Activated CD4-positive, alpha-beta T cell treated with anti-CD3 and anti-CD28 coated beads for 36 hours (primary cell): ENCODE measurements at regions of chr5 and their contacts with region 1.

Region 1: GRCh38 chr5:16465544-16466466 is at the start of gene ZNF622:
- DNase-seq: peak; percentile 92
- ATAC-seq: peak; percentile 80
- H3K4me3 Mint-ChIP-seq: peak within 1 kb of the TSS; percentile 99
- H3K27ac Mint-ChIP-seq: peak within 1 kb of the TSS; percentile 98
- H3K4me1 Mint-ChIP-seq: peaks cover 67% of the 10 kb centered on the region
- H3K27me3 Mint-ChIP-seq: no peaks in the 10 kb centered on the region
- total RNA-seq, gene ZNF622: 30.9 to 36.3 TPM

Region 2: GRCh38 chr5:14809369-14810155 is 1656.2 kb before region 1 on chr5:
- CTCF ChIA-PET with region 1: no interaction called
- POLR2A ChIA-PET with region 1: no interaction called
- intact Hi-C with region 1: loop called in 1 of 2 experiments (anchors 10 kb)
- DNase-seq: peak; percentile 87
- ATAC-seq: peak; percentile 96
- H3K4me3 Mint-ChIP-seq: peak overlapping the region; percentile 55
- H3K27ac Mint-ChIP-seq: peak overlapping the region; percentile 71
- H3K4me1 Mint-ChIP-seq: peaks cover 51% of the 10 kb centered on the region
- H3K27me3 Mint-ChIP-seq: no peaks in the 10 kb centered on the region

Region 3: GRCh38 chr5:16552666-16553343 is 87.0 kb after region 1 on chr5:
- CTCF ChIA-PET with region 1: interaction called, 4 read pairs
- POLR2A ChIA-PET with region 1: no interaction called
- intact Hi-C with region 1: loop called (anchors 2 to 5 kb)
- DNase-seq: peak; percentile 81
- ATAC-seq: peak; percentile 89
- H3K4me3 Mint-ChIP-seq: no peak overlapping the region
- H3K27ac Mint-ChIP-seq: peak overlapping the region; percentile 45
- H3K4me1 Mint-ChIP-seq: peaks cover 30% of the 10 kb centered on the region
- H3K27me3 Mint-ChIP-seq: no peaks in the 10 kb centered on the region

Region 4: GRCh38 chr5:16616536-16617273 is 150.9 kb after region 1 on chr5 and contains the start of gene RETREG1:
- CTCF ChIA-PET with region 1: interaction called, 3 read pairs
- POLR2A ChIA-PET with region 1: no interaction called
- intact Hi-C with region 1: loop called (anchors 1 to 2 kb)
- DNase-seq: peak; percentile 90
- ATAC-seq: peak; percentile 72
- H3K4me3 Mint-ChIP-seq: peak within 1 kb of the TSS; percentile 98
- H3K27ac Mint-ChIP-seq: peak within 1 kb of the TSS; percentile 94
- H3K4me1 Mint-ChIP-seq: peaks cover 28% of the 10 kb centered on the region
- H3K27me3 Mint-ChIP-seq: no peaks in the 10 kb centered on the region
- total RNA-seq, gene RETREG1: 17.7 to 23.3 TPM

Region 5: GRCh38 chr5:16644301-16644889 is 178.6 kb after region 1 on chr5:
- CTCF ChIA-PET with region 1: no interaction called
- POLR2A ChIA-PET with region 1: no interaction called
- intact Hi-C with region 1: no loop called
- DNase-seq: no peak
- ATAC-seq: peak; percentile 23
- H3K4me3 Mint-ChIP-seq: no peak overlapping the region
- H3K27ac Mint-ChIP-seq: peak overlapping the region; percentile 47
- H3K4me1 Mint-ChIP-seq: peaks cover 7% of the 10 kb centered on the region
- H3K27me3 Mint-ChIP-seq: no peaks in the 10 kb centered on the region

Region 6: GRCh38 chr5:16784843-16785791 is 319.3 kb after region 1 on chr5:
- CTCF ChIA-PET with region 1: no interaction called
- POLR2A ChIA-PET with region 1: no interaction called
- intact Hi-C with region 1: loop called (anchors 1 to 10 kb)
- DNase-seq: peak; percentile 79
- ATAC-seq: peak; percentile 98
- H3K4me3 Mint-ChIP-seq: peak overlapping the region; percentile 31
- H3K27ac Mint-ChIP-seq: peak overlapping the region; percentile 45
- H3K4me1 Mint-ChIP-seq: peaks cover 24% of the 10 kb centered on the region
- H3K27me3 Mint-ChIP-seq: peaks cover 16% of the 10 kb centered on the region

Region 7: GRCh38 chr5:16934123-16934522 is 468.3 kb after region 1 on chr5:
- CTCF ChIA-PET with region 1: no interaction called
- POLR2A ChIA-PET with region 1: no interaction called
- intact Hi-C with region 1: loop called (anchors 10 kb)
- DNase-seq: peak; percentile 71
- ATAC-seq: peak; percentile 51
- H3K4me3 Mint-ChIP-seq: no peak overlapping the region
- H3K27ac Mint-ChIP-seq: no peak overlapping the region
- H3K4me1 Mint-ChIP-seq: peaks cover 22% of the 10 kb centered on the region
- H3K27me3 Mint-ChIP-seq: peaks cover 69% of the 10 kb centered on the region

Region 8: DNA sequence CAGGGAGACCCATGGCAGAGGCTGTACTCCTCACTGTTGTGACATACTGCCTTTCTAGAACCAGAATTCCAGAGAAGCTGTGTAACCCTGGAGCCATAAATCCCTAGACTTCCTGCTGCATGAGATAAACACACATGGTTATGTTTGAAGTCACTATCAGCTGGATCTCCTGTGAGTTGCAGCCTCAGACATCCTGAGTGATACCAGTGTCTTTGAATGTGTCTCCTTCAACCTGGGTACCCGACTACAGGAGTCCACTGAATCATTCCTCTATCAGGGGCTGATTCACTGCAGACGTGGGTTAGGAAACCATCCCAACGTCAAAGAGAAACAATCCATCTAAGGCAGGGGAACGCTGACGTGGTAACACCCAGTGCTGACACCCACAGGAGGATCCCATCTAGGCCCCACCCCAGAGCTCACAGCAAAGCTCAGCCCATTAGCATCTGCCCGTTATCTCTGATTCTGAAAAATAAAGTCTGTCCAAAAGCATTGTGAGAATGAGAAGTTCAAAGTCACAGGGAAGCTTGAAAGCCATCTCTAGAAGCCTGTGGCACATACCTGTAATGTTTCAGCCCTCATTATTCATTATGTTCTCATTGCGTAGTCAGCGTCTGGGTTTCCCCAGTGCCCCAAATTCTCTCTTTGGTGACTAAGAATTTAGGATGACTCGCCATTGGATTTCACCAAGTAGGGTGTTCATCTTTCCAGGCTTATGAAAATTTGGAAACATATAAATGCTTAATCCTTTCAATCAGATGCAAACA is 715.3 kb after region 1 on chr5:
- CTCF ChIA-PET with region 1: no interaction called
- POLR2A ChIA-PET with region 1: no interaction called
- intact Hi-C with region 1: loop called in 1 of 2 experiments (anchors 5 kb)
- DNase-seq: peak; percentile 53
- ATAC-seq: peak; percentile 86
- H3K4me3 Mint-ChIP-seq: no peak overlapping the region
- H3K27ac Mint-ChIP-seq: peak overlapping the region; percentile 81
- H3K4me1 Mint-ChIP-seq: peaks cover 17% of the 10 kb centered on the region
- H3K27me3 Mint-ChIP-seq: no peaks in the 10 kb centered on the region